ENCODE measurements at regions of chr16 and their contacts with region 1.

Region 1: GRCh38 chr16:48054881-48055601 is 100.8 kb downstream of the ABCC12 start:
- DNase-seq: peak in 1 of 2 experiments; percentile 46
- H3K4me3 ChIP-seq: no peak overlapping the region
- H3K27ac ChIP-seq: no peak overlapping the region
- H3K4me1 ChIP-seq: peaks cover 19% of the 10 kb centered on the region
- H3K27me3 ChIP-seq: no peaks in the 10 kb centered on the region
- CTCF ChIP-seq: peak; percentile 77

Region 2: DNA sequence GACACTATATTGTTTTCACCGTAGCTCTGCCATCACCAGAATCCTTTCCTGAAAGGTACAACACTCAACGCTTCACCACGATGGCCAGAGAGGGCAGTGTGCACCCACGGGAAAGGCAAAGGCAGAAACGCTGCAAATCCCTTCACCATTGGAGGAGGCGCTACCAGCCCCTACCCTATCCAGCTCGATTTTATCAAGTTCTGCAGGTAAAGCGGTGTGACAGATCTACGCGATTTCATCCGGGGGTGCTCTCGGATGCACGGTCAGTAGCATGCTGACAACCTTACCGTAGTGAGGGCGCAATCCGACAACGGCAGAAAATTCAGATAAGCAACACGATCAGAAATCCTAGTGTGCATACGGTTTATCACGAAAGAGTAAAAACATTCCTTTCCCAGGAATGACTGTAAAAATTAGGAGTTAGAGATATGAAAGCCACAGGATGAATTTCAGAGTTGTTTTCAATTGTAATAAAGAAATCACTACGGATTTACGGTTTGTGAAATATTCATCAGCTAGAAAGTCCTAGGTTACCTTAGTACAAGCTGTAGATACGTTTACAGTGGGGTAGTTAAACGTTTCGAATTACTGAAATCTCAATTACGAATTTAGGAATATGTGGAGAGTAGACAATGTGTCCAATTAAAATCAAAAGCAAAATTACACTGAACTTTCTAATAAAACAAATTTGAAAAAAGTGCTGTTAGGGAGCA is 913.1 kb before region 1 on chr16:
- CTCF ChIA-PET with region 1: interaction called, 11 read pairs
- POLR2A ChIA-PET with region 1: no interaction called
- intact Hi-C with region 1: loop called (anchors 2 kb)
- DNase-seq: peak; percentile 83 to 86
- H3K4me3 ChIP-seq: peak overlapping the region; percentile 75
- H3K27ac ChIP-seq: peak overlapping the region; percentile 17; the same call in 1 of the 2 replicates
- H3K4me1 ChIP-seq: peaks cover 25% of the 10 kb centered on the region
- H3K27me3 ChIP-seq: no peaks in the 10 kb centered on the region
- CTCF ChIP-seq: peak; percentile 90

Region 3: GRCh38 chr16:47460711-47461597 is 594.1 kb before region 1 on chr16 and contains the starts of genes ITFG1 and PHKB:
- CTCF ChIA-PET with region 1: no interaction called
- POLR2A ChIA-PET with region 1: interaction called, 3 read pairs
- intact Hi-C with region 1: loop called (anchors 10 kb)
- DNase-seq: peak; percentile 80 to 91
- H3K4me3 ChIP-seq: peak within 1 kb of the TSS; percentile 75
- H3K27ac ChIP-seq: peak within 1 kb of the TSS; percentile 94
- H3K4me1 ChIP-seq: peaks cover 27% of the 10 kb centered on the region
- H3K27me3 ChIP-seq: no peaks in the 10 kb centered on the region
- CTCF ChIP-seq: no peak
- total RNA-seq, gene ITFG1: 27.7 and 33.0 TPM in 2 replicates
- total RNA-seq, gene PHKB: 65.5 and 81.3 TPM in 2 replicates

Region 4: GRCh38 chr16:47533744-47534292 is 521.2 kb before region 1 on chr16:
- CTCF ChIA-PET with region 1: no interaction called
- POLR2A ChIA-PET with region 1: no interaction called
- intact Hi-C with region 1: loop called (anchors 10 kb)
- DNase-seq: no peak
- H3K4me3 ChIP-seq: no peak overlapping the region
- H3K27ac ChIP-seq: no peak overlapping the region
- H3K4me1 ChIP-seq: no peaks in the 10 kb centered on the region
- H3K27me3 ChIP-seq: no peaks in the 10 kb centered on the region
- CTCF ChIP-seq: no peak

Region 5: DNA sequence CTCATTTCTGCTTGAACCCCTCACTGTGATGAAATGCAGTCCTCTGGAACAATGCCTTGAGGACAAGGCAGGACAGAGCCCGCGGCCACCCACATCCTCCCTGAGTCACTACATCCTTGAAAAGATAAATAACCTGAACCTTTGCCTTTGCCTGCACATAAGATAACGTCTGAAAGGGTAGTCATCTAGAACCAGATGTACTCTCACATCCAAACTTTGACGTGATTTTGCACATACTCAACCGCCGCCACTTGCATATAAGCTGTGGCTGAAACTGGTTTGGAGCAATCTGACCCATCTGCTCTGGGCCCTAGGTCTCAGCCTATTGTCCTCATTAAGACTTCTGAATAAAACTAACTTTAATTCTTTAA is 341.8 kb before region 1 on chr16:
- CTCF ChIA-PET with region 1: interaction called, 3 read pairs
- POLR2A ChIA-PET with region 1: no interaction called
- intact Hi-C with region 1: loop called (anchors 10 kb)
- DNase-seq: peak; percentile 31 to 64
- H3K4me3 ChIP-seq: no peak overlapping the region
- H3K27ac ChIP-seq: no peak overlapping the region
- H3K4me1 ChIP-seq: peaks cover 44% of the 10 kb centered on the region
- H3K27me3 ChIP-seq: no peaks in the 10 kb centered on the region
- CTCF ChIP-seq: no peak

Region 6: DNA sequence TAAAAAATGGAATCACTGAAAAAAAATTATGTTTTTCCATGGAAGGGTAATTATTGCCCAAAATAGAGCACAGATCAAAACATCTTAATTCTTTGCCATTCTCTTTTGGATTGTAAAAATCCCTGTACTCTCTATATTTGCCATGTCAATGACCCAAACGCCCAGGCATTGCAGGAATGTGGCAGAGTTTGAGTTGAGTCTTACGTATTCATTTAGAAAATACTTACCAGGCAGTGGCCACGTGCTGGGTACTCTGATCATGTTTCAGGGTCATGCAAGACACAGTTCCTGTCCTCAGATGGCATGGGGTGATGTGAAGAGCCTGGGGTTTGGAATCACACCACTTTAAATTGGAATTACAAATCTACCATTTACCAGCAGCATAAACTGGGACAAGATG is 166.9 kb before region 1 on chr16:
- CTCF ChIA-PET with region 1: interaction called, 4 read pairs
- POLR2A ChIA-PET with region 1: no interaction called
- intact Hi-C with region 1: loop called (anchors 10 kb)
- DNase-seq: peak; percentile 62 to 73
- H3K4me3 ChIP-seq: no peak overlapping the region
- H3K27ac ChIP-seq: peak overlapping the region; percentile 68
- H3K4me1 ChIP-seq: peaks cover 21% of the 10 kb centered on the region
- H3K27me3 ChIP-seq: no peaks in the 10 kb centered on the region
- CTCF ChIP-seq: no peak

Region 7: GRCh38 chr16:47928008-47928407 is 127.0 kb before region 1 on chr16:
- CTCF ChIA-PET with region 1: no interaction called
- POLR2A ChIA-PET with region 1: interaction called, 13 read pairs
- intact Hi-C with region 1: loop called (anchors 5 kb)
- DNase-seq: no peak
- H3K4me3 ChIP-seq: no peak overlapping the region
- H3K27ac ChIP-seq: no peak overlapping the region
- H3K4me1 ChIP-seq: peaks cover 23% of the 10 kb centered on the region
- H3K27me3 ChIP-seq: no peaks in the 10 kb centered on the region
- CTCF ChIP-seq: no peak

Region 8: DNA sequence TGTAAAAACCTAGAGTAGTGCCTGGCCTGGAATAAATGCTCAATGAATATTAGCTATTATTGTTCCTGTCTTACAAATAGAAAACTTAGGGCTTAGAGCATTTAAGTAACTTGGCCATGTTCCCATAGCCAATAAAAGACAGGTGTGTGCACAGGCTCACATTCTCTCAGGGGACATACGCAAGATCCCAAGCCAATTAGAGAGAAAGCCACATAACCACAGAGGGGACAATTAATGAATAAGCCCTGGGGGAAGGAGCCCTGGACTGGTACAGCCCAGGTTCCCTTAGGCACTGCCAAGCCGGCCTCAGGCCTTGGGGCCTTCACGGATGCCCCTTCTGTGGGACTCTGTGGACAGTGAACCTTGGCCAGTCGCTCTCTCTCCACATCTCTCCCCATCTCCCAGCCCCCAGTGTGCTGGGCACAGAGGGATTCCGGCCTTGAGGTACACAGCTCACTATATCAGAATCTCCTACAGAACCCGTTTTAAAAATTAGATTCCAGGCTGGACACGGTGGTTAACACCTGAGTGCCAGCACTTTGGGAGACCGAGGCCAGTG is 128.0 kb after region 1 on chr16:
- CTCF ChIA-PET with region 1: no interaction called
- POLR2A ChIA-PET with region 1: no interaction called
- intact Hi-C with region 1: no loop called
- DNase-seq: no peak
- H3K4me3 ChIP-seq: no peak overlapping the region
- H3K27ac ChIP-seq: no peak overlapping the region
- H3K4me1 ChIP-seq: no peaks in the 10 kb centered on the region
- H3K27me3 ChIP-seq: no peaks in the 10 kb centered on the region
- CTCF ChIP-seq: no peak